Prostate gland (tissue), 2 donors: ENCODE measurements at regions of chr2 and their contacts with region 1.

Region 1: DNA sequence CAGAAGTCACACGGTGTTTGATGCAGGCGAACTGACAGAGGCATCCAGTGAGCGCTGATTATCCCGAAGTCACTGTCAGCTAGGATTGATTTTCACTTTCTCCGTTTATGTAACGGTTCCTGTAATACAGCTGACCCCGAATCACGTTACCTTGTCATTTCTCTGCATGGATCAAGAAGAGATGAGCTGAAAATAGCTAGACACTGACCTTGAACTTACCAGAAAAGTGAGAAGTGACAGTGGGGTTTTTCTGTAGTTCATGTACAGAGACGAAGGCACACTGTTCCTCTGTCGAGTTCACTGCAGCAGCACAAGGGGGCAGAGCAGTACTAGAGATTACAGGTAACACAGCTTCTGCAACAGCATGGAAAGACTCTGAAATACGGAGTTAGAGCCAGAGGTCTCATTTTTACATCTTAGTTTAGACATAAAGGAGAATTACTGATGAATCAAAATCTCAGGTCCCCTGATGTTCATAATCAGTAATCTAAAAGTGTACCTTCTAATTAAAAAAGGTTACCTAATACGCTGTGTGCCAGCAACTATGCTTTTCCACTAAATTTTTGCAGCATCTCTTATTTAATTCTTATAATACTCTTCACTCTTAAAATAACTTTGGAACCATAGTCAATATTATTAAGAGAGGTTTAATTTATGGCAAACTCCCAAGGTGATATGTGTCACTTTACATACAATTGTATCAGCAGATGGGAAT is 33.1 kb downstream of the ARHGAP15 start:
- DNase-seq: peak; percentile 29
- H3K4me3 ChIP-seq: no peak overlapping the region
- H3K27ac ChIP-seq: no peak overlapping the region
- H3K4me1 ChIP-seq: no peaks in the 10 kb centered on the region
- H3K27me3 ChIP-seq: no peaks in the 10 kb centered on the region
- CTCF ChIP-seq: peak in 3 of 4 experiments; percentile 16 to 50 (median 43)
- POLR2A ChIP-seq: no peak

Region 2: GRCh38 chr2:143229952-143230351 is 67.7 kb after region 1 on chr2:
- intact Hi-C with region 1: loop called (anchors 10 kb)
- DNase-seq: no peak
- H3K4me3 ChIP-seq: no peak overlapping the region
- H3K27ac ChIP-seq: no peak overlapping the region
- H3K4me1 ChIP-seq: no peaks in the 10 kb centered on the region
- H3K27me3 ChIP-seq: no peaks in the 10 kb centered on the region
- CTCF ChIP-seq: no peak
- POLR2A ChIP-seq: no peak

Region 3: GRCh38 chr2:143284087-143284675 is 121.9 kb after region 1 on chr2:
- intact Hi-C with region 1: no loop called
- DNase-seq: no peak
- H3K4me3 ChIP-seq: no peak overlapping the region
- H3K27ac ChIP-seq: no peak overlapping the region
- H3K4me1 ChIP-seq: no peaks in the 10 kb centered on the region
- H3K27me3 ChIP-seq: no peaks in the 10 kb centered on the region
- CTCF ChIP-seq: peak in 3 of 4 experiments; percentile 5 to 27 (median 20)
- POLR2A ChIP-seq: no peak